ENCODE measurements at regions of chr12 and their contacts with region 1.

Region 1: DNA sequence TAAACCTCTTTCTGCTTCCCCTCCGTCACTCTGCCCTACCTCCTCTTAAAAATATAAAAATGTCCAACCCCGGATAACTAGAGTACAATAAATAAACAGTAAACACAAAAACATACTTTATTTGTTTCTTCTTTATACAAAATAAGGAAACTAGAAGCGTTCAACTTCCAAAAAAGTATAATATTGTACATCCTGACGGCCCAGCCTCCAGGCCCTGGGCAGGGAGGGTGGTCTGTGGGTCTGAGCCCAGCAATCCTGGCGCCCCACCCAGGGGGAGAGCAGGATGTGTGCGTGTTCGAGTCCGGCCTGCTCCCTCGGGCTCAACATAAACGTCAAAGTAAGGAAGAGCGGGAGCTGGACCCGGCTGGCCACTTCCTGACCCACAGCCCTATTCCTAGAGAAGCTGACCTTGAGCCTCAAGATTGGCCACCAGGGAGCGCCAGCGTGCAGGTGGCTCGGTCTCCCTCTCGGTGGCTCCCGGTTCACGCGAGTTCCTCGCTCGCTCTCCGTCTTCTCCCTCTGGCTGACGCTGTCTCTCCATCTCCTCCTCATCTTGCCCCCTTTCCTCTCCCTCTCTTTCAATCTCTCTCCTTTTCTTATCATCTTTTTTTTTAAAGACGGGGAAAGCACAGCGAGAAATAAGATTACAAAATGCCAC is 9.4 kb downstream of the LHX5 start:
- DNase-seq: peak; percentile 45 to 79 (median 59)
- ATAC-seq: peak; percentile 65
- H3K4me3 ChIP-seq: peak overlapping the region; percentile 36
- H3K4me3 Mint-ChIP-seq: peak overlapping the region; percentile 88
- H3K27ac ChIP-seq: no peak overlapping the region
- H3K27ac Mint-ChIP-seq: no peak overlapping the region
- H3K4me1 ChIP-seq: peaks cover 34% of the 10 kb centered on the region
- H3K4me1 Mint-ChIP-seq: peaks cover 31% of the 10 kb centered on the region
- H3K27me3 ChIP-seq: peaks cover 50 to 76% of the 10 kb centered on the region in 2 experiments
- H3K27me3 Mint-ChIP-seq: peaks cover 77% of the 10 kb centered on the region
- CTCF ChIP-seq: peak; percentile 94

Region 2: GRCh38 chr12:113912760-113913329 is 450.6 kb after region 1 on chr12:
- CTCF ChIA-PET with region 1: no interaction called
- POLR2A ChIA-PET with region 1: no interaction called
- intact Hi-C with region 1: loop called in 1 of 2 experiments (anchors 5 kb)
- DNase-seq: peak in 13 of 14 experiments; percentile 13 to 63 (median 29)
- ATAC-seq: no peak
- H3K4me3 ChIP-seq: no peak overlapping the region
- H3K4me3 Mint-ChIP-seq: no peak overlapping the region
- H3K27ac ChIP-seq: no peak overlapping the region
- H3K27ac Mint-ChIP-seq: no peak overlapping the region
- H3K4me1 ChIP-seq: no peaks in the 10 kb centered on the region
- H3K4me1 Mint-ChIP-seq: no peaks in the 10 kb centered on the region
- H3K27me3 ChIP-seq: no peaks in the 10 kb centered on the region
- H3K27me3 Mint-ChIP-seq: no peaks in the 10 kb centered on the region
- CTCF ChIP-seq: peak; percentile 69

Region 3: DNA sequence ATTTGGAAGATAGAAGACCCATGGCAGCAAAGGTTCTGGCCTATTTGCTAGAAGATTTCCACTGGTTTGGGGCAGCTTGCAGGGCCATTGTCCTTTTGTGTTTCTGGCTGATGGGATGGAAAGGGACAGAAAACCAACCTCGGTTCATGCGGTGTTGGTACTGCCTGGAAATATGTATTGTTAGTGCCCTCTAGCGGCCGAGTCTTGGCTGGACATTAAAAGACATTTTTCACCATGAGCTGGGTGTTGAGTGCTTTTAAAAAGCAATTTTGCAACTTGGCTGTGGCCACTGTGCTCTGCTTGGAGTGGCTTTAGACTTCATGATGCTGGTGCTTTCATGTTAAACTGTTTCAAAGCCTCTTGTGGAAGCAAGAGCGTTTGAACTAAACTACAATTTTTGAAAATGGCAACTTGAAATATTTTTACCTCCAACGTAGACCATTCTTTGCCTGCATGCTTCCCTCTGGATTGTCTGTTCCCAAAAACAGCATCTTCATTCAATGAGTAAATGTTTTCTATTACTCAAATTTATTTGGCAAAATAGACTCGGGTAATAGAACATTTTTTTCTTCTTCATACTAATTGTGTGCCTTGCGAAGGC is 1046.4 kb after region 1 on chr12:
- CTCF ChIA-PET with region 1: no interaction called
- POLR2A ChIA-PET with region 1: no interaction called
- intact Hi-C with region 1: loop called (anchors 2 to 5 kb)
- DNase-seq: peak; percentile 11 to 71 (median 41)
- ATAC-seq: peak; percentile 58
- H3K4me3 ChIP-seq: no peak overlapping the region
- H3K4me3 Mint-ChIP-seq: no peak overlapping the region
- H3K27ac ChIP-seq: no peak overlapping the region
- H3K27ac Mint-ChIP-seq: no peak overlapping the region
- H3K4me1 ChIP-seq: no peaks in the 10 kb centered on the region
- H3K4me1 Mint-ChIP-seq: no peaks in the 10 kb centered on the region
- H3K27me3 ChIP-seq: peaks cover 0 to under 1% of the 10 kb centered on the region in 2 experiments
- H3K27me3 Mint-ChIP-seq: peaks cover 25% of the 10 kb centered on the region
- CTCF ChIP-seq: peak; percentile 78